Activated CD8-positive, alpha-beta T cell treated with anti-CD3 and anti-CD28 coated beads, Interleukin-2, amount 10 ng/mL, durations not matched to agents 7 days and 5 days (primary cell): ENCODE measurements at regions of chr16 and their contacts with region 1.

Region 1: GRCh38 chr16:56866943-56867830 is 2.2 kb downstream of the SLC12A3 start:
- DNase-seq: peak; percentile 70
- ATAC-seq: no peak
- H3K4me3 Mint-ChIP-seq: no peak overlapping the region
- H3K27ac Mint-ChIP-seq: no peak overlapping the region
- H3K4me1 Mint-ChIP-seq: peaks cover 30% of the 10 kb centered on the region
- H3K27me3 Mint-ChIP-seq: no peaks in the 10 kb centered on the region

Region 2: DNA sequence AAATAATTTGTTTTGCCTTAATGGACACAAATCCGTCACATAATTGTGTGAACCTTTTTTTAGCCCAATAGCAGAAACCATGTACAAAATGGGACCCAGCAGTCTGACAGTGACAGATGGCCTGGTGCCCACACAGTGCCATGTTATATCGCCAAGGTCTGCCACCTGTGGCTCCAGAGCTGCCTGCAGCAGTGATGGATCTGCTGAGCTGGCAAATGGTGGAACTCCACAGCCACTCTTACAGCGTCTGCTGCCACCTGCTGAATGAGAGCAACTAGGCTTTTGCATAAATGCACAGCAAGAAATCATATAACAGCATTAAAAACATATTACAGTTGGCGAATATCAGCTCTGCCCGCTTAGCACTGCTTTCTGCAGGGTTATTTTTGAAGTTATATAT is 77.8 kb before region 1 on chr16:
- CTCF ChIA-PET with region 1: interaction called, 22 read pairs
- POLR2A ChIA-PET with region 1: no interaction called
- DNase-seq: peak; percentile 57
- ATAC-seq: peak; percentile 69
- H3K4me3 Mint-ChIP-seq: no peak overlapping the region
- H3K27ac Mint-ChIP-seq: no peak overlapping the region
- H3K4me1 Mint-ChIP-seq: no peaks in the 10 kb centered on the region
- H3K27me3 Mint-ChIP-seq: no peaks in the 10 kb centered on the region

Region 3: DNA sequence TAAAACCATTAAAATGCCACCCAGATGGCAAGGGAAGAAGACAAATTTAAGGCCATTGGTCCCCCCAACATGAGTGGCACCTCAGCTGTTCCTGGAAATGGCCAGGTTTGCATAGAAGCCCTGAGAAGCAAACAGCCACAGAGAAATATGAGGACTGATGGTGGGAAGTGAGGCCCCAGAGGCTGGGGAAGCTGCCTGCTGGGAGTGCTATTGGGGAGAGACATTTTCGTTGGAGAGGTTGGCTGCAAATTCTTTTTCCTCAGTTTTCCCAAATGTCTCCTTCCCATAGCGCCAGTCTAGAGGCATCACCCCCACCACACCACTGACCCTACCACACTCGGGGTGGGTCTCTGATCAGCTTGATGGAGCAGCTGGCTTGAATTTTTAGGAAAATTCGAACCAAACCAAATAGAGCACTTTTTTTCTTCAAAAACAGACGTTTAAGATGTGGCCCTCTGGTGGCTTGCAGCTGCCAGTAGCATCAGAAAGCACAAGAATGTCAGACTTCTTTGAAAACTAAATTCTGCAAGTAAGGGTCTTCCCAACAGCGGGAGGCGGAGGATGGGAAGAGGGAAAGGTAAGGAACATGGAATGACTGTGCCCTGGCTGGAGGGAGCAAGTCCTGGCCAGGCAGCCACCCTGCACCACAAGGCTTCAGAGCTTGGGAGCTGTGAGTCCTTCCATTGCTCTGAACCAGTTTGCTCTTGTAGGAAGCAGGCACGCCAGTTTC is 15.4 kb before region 1 on chr16:
- CTCF ChIA-PET with region 1: interaction called, 96 read pairs
- POLR2A ChIA-PET with region 1: no interaction called
- DNase-seq: no peak
- ATAC-seq: no peak
- H3K4me3 Mint-ChIP-seq: no peak overlapping the region
- H3K27ac Mint-ChIP-seq: no peak overlapping the region
- H3K4me1 Mint-ChIP-seq: peaks cover 42% of the 10 kb centered on the region
- H3K27me3 Mint-ChIP-seq: no peaks in the 10 kb centered on the region

Region 4: DNA sequence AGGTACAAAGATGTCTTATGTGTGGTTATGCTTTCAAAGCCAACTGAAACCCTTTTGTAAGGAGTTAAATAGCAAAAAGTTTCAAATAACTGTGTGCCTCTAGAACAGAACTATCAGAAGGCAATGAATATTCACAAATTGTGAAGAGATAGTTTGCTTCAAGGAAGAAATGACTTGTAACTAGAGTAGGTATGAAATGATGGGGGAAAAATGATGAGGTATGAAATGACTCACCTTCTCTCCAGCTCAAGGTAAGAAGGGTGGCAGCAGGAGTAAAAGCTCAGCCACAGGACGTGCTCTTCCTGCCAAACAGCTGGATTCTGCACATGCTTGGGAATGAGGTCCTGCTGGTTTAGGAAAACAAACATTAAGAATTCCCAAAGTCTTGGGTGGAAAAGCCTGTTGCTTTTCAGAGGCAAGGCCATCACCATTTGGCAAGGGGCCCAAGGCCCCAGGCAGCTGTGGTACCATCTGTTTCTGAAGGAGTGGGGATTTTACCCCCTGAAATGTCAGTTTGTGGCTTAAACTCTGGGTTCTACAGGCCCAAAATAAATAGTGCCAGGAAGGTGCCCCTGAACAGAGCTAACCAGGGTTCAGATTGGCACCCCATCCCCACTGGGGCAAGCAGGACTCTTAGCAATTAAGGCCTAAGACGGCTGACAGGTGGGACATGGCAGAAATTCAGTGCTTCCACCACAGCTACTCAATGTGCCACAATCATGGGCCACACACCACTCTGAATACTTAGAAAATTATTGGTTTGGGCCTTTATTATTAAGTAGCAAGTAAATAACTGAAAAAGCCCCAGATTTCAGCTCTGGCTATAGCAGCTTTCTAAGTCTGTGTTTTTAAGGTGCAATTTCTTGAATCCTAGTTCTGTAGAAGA is 78.0 kb after region 1 on chr16:
- CTCF ChIA-PET with region 1: interaction called, 57 read pairs
- POLR2A ChIA-PET with region 1: no interaction called
- DNase-seq: no peak
- ATAC-seq: no peak
- H3K4me3 Mint-ChIP-seq: no peak overlapping the region
- H3K27ac Mint-ChIP-seq: peak overlapping the region; percentile 11
- H3K4me1 Mint-ChIP-seq: peaks cover 21% of the 10 kb centered on the region
- H3K27me3 Mint-ChIP-seq: no peaks in the 10 kb centered on the region

Region 5: GRCh38 chr16:57098188-57098841 is 231.1 kb after region 1 on chr16:
- CTCF ChIA-PET with region 1: no interaction called
- POLR2A ChIA-PET with region 1: no interaction called
- DNase-seq: no peak
- ATAC-seq: no peak
- H3K4me3 Mint-ChIP-seq: no peak overlapping the region
- H3K27ac Mint-ChIP-seq: no peak overlapping the region
- H3K4me1 Mint-ChIP-seq: peaks cover 19% of the 10 kb centered on the region
- H3K27me3 Mint-ChIP-seq: peaks cover 20% of the 10 kb centered on the region